ENCODE measurements at regions of chr10 and their contacts with region 1.

Region 1: GRCh38 chr10:11823122-11823988 is at the start of gene PROSER2:
- DNase-seq: peak; percentile 21
- H3K4me3 Mint-ChIP-seq: peak within 1 kb of the TSS; percentile 71
- H3K27ac Mint-ChIP-seq: no peak within 1 kb of the TSS
- H3K4me1 Mint-ChIP-seq: peaks cover 7% of the 10 kb centered on the region
- H3K27me3 Mint-ChIP-seq: peaks cover 37% of the 10 kb centered on the region
- total RNA-seq, gene PROSER2: 0.57 to 0.83 TPM

Region 2: GRCh38 chr10:11782793-11783557 is 40.4 kb before region 1 on chr10:
- CTCF ChIA-PET with region 1: interaction called, 34 read pairs
- intact Hi-C with region 1: loop called (anchors 2 kb)
- DNase-seq: peak; percentile 9
- H3K4me3 Mint-ChIP-seq: no peak overlapping the region
- H3K27ac Mint-ChIP-seq: no peak overlapping the region
- H3K4me1 Mint-ChIP-seq: peaks cover 8% of the 10 kb centered on the region
- H3K27me3 Mint-ChIP-seq: no peaks in the 10 kb centered on the region

Region 3: DNA sequence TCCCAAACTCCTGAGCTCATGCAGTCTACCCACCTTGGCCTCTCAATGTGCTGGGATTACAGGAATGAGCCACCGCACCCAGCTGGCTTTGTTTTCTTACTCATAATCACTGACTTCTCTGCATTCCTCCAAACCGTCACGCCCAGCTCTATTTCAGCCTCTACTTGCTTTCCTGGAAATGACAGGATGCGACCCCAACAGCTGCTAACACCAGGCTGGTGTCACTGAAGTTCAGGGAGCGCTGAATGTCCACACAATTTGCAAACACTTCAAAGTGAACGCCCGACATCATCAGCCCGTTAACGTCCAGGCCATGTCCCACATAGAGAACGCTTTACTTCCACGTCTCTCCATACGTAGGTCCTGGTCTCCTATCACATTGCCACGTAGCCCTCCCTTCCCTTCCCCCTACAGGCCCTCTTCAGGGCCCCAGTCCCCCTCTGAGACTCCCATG is 13.0 kb before region 1 on chr10:
- CTCF ChIA-PET with region 1: interaction called, 10 read pairs
- intact Hi-C with region 1: no loop called
- DNase-seq: no peak
- H3K4me3 Mint-ChIP-seq: no peak overlapping the region
- H3K27ac Mint-ChIP-seq: no peak overlapping the region
- H3K4me1 Mint-ChIP-seq: no peaks in the 10 kb centered on the region
- H3K27me3 Mint-ChIP-seq: peaks cover 1% of the 10 kb centered on the region